ENCODE measurements at regions of chr3 and their contacts with region 1.

Region 1: GRCh38 chr3:48439820-48440589 is at the starts of genes CCDC51 and TMA7:
- ATAC-seq: peak; percentile 90 to 98 (median 96)
- H3K4me3 ChIP-seq: peak within 1 kb of the TSS; percentile 62 to 94 (median 77)
- H3K27ac ChIP-seq: peak within 1 kb of the TSS; percentile 78 to 90
- H3K4me1 ChIP-seq: peaks cover 14 to 16% of the 10 kb centered on the region in 2 donors
- total RNA-seq, gene CCDC51: 14.9 to 90.4 (median 20.4) TPM
- total RNA-seq, gene TMA7: 375 to 754 (median 499) TPM

Region 2: DNA sequence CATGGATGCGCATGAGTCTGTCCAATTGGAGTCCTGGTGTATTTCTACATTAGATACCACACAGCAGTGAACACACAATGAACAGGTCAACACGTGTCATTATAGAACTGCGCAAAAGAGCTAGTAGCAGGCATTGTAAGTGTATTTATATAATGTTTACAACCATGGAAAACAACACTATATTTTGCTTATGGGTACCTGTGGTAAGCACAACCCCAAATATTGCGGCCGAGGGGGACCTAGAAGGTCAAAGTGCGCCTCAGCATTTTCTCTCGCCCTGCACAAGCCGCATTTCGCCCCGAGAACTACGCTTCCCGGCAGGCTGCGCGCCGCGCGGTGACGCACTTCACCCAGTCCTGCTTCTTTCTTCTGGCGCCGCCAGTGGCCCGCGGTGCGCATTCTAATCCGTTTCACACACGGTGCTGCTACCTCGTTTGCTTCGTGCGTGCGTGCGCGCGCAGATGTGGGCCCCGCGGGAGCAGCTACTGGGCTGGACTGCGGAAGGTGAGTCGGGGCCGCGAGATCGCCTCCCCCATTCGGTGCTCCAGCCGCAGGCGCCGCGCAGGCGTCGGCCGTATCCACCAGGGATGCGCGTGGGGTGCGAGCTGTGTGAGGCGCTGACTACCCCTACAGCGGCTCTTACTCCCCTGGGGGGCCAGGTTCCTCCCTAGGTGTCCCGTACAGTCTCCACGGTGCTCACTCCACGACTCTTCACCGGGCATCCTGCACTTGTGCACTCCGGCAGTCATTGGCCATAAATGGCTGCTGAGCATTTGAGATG is 199.1 kb before region 1 on chr3 and contains the start of gene ZNF589:
- in situ Hi-C with region 1: loop called in 1 of 9 experiments (anchors 25 kb)
- ATAC-seq: peak; percentile 88 to 97 (median 95)
- H3K4me3 ChIP-seq: peak within 1 kb of the TSS; percentile 54 to 78 (median 68)
- H3K27ac ChIP-seq: peak within 1 kb of the TSS; percentile 21 to 72
- H3K4me1 ChIP-seq: peaks cover 25 to 33% of the 10 kb centered on the region in 2 donors
- total RNA-seq, gene ZNF589: 12.7 to 35.7 (median 18.0) TPM

Region 3: GRCh38 chr3:48268381-48269183 is 171.4 kb before region 1 on chr3:
- in situ Hi-C with region 1: loop called in 6 of 9 experiments (anchors 10 to 25 kb)
- ATAC-seq: peak in 7 of 8 experiments; percentile 25 to 65 (median 52)
- H3K4me3 ChIP-seq: no peak overlapping the region
- H3K27ac ChIP-seq: no peak overlapping the region
- H3K4me1 ChIP-seq: peaks cover 0 to 3% of the 10 kb centered on the region in 2 donors

Region 4: DNA sequence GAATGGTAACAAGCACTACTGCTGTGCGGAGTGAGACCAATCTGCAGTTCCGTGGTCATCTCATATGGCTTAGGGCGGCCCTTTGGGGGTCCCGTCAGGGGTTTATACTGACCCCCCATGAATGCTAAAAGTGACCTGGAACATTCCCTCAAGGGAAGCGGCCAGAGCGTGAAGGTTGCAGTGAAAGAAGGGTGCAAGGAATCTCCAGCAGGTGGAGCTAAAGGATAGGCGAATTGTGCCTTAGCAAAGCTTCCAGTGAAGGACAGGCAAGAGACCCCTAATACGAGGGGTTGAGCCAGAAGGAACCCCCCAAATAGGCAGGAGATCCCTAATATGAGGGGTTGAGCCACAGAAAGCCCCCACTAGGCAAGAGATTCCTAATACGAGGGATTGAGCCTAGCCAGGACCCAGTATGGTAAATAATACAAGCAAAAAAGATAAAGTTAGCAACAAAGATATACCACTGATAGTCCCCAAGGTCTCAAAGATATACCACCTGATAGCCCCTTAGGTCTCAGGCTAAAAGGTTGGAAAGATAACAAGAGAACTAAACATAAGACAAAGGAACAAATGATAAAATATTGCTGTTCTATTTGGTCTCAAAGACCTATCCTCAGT is 166.3 kb before region 1 on chr3:
- in situ Hi-C with region 1: loop called in 6 of 9 experiments (anchors 10 to 25 kb)
- ATAC-seq: peak; percentile 9 to 88 (median 68)
- H3K4me3 ChIP-seq: no peak overlapping the region
- H3K27ac ChIP-seq: no peak overlapping the region
- H3K4me1 ChIP-seq: peaks cover 15 to 17% of the 10 kb centered on the region in 2 donors

Measured in motor neuron (in vitro differentiated cells).